Activated naive CD4-positive, alpha-beta T cell treated with anti-CD3 and anti-CD28 coated beads, Interleukin-2, amount 10 ng/mL, durations not matched to agents 7 days and 5 days (primary cell): ENCODE measurements at regions of chr2 and their contacts with region 1.

Region 1: GRCh38 chr2:70616168-70616694 is 62.6 kb upstream of the TGFA start:
- DNase-seq: no peak
- H3K4me3 Mint-ChIP-seq: no peak overlapping the region
- H3K27ac Mint-ChIP-seq: no peak overlapping the region
- H3K4me1 Mint-ChIP-seq: peaks cover 3% of the 10 kb centered on the region
- H3K27me3 Mint-ChIP-seq: peaks cover 22% of the 10 kb centered on the region

Region 2: GRCh38 chr2:70557171-70557838 is 58.9 kb before region 1 on chr2:
- CTCF ChIA-PET with region 1: interaction called, 17 read pairs
- DNase-seq: no peak
- H3K4me3 Mint-ChIP-seq: no peak overlapping the region
- H3K27ac Mint-ChIP-seq: no peak overlapping the region
- H3K4me1 Mint-ChIP-seq: peaks cover 25% of the 10 kb centered on the region
- H3K27me3 Mint-ChIP-seq: peaks cover 69% of the 10 kb centered on the region